AG04449 (cell line): ENCODE measurements at regions of chr20 and their contacts with region 1.

Region 1: GRCh38 chr20:20860078-20860806 is 147.8 kb upstream of the RALGAPA2 start:
- DNase-seq: peak; percentile 40
- H3K4me3 ChIP-seq: no peak overlapping the region
- CTCF ChIP-seq: peak; percentile 77

Region 2: DNA sequence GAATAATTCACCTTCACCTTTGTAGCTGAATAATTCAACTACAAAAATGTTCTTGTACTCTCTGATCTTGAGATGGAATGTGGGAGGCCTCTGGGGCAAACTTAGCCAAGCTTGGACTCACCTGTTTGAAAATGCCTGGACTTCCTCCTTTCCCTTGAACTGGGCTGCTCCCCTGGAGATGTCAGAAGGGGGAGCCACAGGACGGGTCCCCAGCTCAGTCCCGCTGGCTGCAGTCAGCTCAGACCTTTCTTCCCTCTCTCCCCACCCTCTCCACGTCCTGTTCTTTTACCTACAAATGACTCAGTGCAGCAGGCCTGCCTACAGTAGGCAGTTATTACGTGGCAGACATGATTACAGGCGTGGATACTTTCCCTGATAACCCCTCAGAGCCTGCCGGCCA is 16.3 kb before region 1 on chr20:
- CTCF ChIA-PET with region 1: interaction called, 16 read pairs
- POLR2A ChIA-PET with region 1: no interaction called
- DNase-seq: no peak
- H3K4me3 ChIP-seq: no peak overlapping the region
- CTCF ChIP-seq: no peak

Region 3: DNA sequence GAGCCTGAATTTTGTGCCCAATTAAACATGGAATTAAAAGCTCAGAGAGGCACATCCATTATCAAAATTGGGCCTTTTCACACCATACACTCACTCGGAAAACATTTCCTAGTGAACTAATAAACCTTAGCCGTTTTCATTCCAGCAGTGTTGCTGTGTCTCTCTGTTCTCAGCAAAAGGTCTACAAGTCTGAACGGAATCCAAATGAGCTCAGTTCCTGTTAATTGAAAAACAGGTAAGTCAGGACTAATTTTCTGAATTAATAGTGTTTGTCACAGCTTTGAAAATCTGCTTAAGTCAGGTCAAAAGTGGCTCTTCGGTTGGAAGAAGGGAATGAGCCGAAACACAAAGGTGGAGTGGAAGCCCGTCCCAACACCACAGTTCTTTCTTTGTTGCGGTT is 15.5 kb after region 1 on chr20:
- CTCF ChIA-PET with region 1: interaction called, 13 read pairs
- POLR2A ChIA-PET with region 1: no interaction called
- DNase-seq: no peak
- H3K4me3 ChIP-seq: no peak overlapping the region
- CTCF ChIP-seq: no peak